Ovary (tissue), 10 donors: ENCODE measurements at regions of chr12 and their contacts with region 1.

Region 1: DNA sequence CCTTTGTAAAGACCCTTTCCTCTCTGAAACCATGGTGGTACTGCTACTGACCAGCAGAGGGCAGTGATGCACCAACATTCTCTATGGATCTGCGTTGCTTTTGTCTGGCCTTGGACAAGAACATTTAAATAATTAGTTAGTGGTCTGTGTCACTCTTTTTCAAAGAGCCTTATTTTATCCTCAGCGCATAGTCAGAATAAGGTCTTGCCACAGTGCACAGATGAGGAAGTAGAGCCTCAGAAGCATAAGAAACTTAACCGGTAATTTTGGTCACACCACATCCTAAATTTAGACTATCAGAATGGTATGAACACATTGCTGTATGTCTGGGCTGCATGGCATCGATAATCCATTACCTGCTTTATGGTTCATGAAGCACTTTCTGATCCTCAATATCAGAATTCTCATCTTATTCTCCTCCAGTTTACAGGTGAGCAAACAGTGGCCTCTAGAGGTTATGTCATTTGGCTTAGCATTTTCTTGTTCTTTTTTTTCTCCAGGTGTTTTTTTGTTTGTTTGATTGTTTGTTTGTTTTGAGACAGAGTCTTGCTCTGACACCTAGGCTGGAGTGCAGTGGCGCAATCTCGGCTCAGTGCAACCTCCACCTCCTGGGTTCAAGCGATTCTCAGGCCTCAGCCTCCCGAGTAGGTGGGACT is 23.7 kb upstream of the IFT81 start:
- DNase-seq: peak; percentile 60 to 83 (median 73)
- H3K4me3 ChIP-seq: no peak overlapping the region
- H3K27ac ChIP-seq: no peak overlapping the region
- H3K4me1 ChIP-seq: no peaks in the 10 kb centered on the region
- H3K27me3 ChIP-seq: no peaks in the 10 kb centered on the region
- CTCF ChIP-seq: peak; percentile 84 to 95 (median 90)
- EP300 ChIP-seq: no peak
- POLR2A ChIP-seq: no peak

Region 2: DNA sequence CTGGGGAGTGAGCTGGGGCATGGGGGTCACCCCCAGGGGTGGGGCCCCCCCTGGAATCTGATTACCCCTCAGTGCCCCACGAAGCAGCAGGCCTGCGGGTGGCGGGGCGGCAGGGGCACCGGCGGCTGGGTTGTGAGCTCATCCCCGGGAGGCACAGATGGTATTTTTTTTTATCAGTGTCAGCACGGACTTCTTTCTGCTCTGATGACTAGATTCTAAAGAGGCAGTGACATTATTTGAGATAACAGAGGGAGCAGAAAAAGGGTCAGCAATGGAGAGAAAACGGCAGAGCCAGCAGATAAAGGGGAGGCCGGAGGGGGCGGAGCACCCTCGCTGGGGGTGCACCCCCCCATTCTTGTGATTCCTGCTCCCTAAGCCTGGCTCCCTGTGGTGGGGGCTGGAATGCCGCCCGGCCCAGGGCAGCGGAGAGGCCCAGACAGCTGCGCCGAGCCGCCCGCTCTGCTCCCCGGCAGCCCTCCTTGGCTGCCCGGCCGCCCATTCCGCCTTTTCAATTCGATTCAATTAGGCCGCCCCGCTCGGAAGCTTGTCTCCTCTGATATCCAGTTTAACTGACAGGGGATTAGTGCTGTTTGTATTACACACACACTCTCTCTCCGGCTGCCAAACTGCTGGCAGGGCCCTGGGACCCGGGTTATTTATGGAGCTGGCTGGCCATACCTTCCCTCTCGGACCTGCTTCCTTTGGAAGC is 494.0 kb before region 1 on chr12:
- intact Hi-C with region 1: no loop called
- DNase-seq: peak in 4 of 5 donors; percentile 18 to 52 (median 38)
- H3K4me3 ChIP-seq: no peak overlapping the region
- H3K27ac ChIP-seq: no peak overlapping the region
- H3K4me1 ChIP-seq: peaks cover 3% of the 10 kb centered on the region
- H3K27me3 ChIP-seq: no peaks in the 10 kb centered on the region
- CTCF ChIP-seq: no peak
- EP300 ChIP-seq: no peak
- POLR2A ChIP-seq: no peak

Region 3: GRCh38 chr12:110224379-110225304 is 124.2 kb after region 1 on chr12:
- intact Hi-C with region 1: loop called in 3 of 4 experiments (anchors 5 to 10 kb)
- DNase-seq: peak in 1 of 5 donors; percentile 56
- H3K4me3 ChIP-seq: no peak overlapping the region
- H3K27ac ChIP-seq: peak overlapping the region in 1 of 2 donors; percentile 68
- H3K4me1 ChIP-seq: peaks cover 7% of the 10 kb centered on the region
- H3K27me3 ChIP-seq: no peaks in the 10 kb centered on the region
- CTCF ChIP-seq: peak; percentile 48 to 84 (median 76)
- EP300 ChIP-seq: no peak
- POLR2A ChIP-seq: no peak

Region 4: GRCh38 chr12:110424237-110424636 is 323.8 kb after region 1 on chr12:
- intact Hi-C with region 1: loop called in 2 of 4 experiments (anchors 5 kb)
- DNase-seq: no peak
- H3K4me3 ChIP-seq: no peak overlapping the region
- H3K27ac ChIP-seq: no peak overlapping the region
- H3K4me1 ChIP-seq: peaks cover 6% of the 10 kb centered on the region
- H3K27me3 ChIP-seq: no peaks in the 10 kb centered on the region
- CTCF ChIP-seq: no peak
- EP300 ChIP-seq: no peak
- POLR2A ChIP-seq: no peak

Region 5: GRCh38 chr12:110431957-110432587 is 331.6 kb after region 1 on chr12:
- intact Hi-C with region 1: loop called in 2 of 4 experiments (anchors 1 to 5 kb)
- DNase-seq: peak in 2 of 5 donors; percentile 39 to 47
- H3K4me3 ChIP-seq: peak overlapping the region; percentile 51
- H3K27ac ChIP-seq: no peak overlapping the region
- H3K4me1 ChIP-seq: no peaks in the 10 kb centered on the region
- H3K27me3 ChIP-seq: no peaks in the 10 kb centered on the region
- CTCF ChIP-seq: no peak
- EP300 ChIP-seq: no peak
- POLR2A ChIP-seq: no peak